ENCODE measurements at regions of chrX and their contacts with region 1.

Region 1: GRCh38 chrX:50770702-50771101 is 43.3 kb downstream of the SHROOM4 start:
- DNase-seq: peak; percentile 5
- H3K4me3 ChIP-seq: no peak overlapping the region
- H3K27ac ChIP-seq: no peak overlapping the region
- H3K4me1 ChIP-seq: peaks cover 17% of the 10 kb centered on the region
- H3K27me3 ChIP-seq: no peaks in the 10 kb centered on the region
- CTCF ChIP-seq: no peak

Region 2: DNA sequence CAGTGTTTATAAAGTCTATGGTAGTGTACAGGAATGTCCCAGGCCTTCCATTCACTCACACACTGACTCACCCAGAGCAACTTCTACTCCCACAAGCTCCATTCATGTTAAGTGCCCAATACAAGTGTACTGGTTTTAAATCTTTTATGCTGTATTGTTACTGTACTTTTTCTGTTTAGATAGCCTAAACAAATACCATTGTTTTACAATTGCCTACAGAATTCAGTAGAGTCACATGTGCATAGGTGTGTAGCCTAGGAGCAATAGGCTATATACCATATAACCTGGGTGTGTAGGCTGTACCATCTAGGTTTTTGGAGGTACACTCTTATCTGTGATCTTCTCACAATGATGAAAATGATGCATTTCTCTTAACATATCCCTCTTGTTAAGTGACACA is 426.8 kb before region 1 on chrX:
- CTCF ChIA-PET with region 1: no interaction called
- dilution Hi-C with region 1: no loop called
- in situ Hi-C with region 1: no loop called
- intact Hi-C with region 1: no loop called
- DNase-seq: no peak
- H3K4me3 ChIP-seq: no peak overlapping the region
- H3K27ac ChIP-seq: no peak overlapping the region
- H3K4me1 ChIP-seq: no peaks in the 10 kb centered on the region
- H3K27me3 ChIP-seq: peaks cover 10% of the 10 kb centered on the region
- CTCF ChIP-seq: no peak

Region 3: DNA sequence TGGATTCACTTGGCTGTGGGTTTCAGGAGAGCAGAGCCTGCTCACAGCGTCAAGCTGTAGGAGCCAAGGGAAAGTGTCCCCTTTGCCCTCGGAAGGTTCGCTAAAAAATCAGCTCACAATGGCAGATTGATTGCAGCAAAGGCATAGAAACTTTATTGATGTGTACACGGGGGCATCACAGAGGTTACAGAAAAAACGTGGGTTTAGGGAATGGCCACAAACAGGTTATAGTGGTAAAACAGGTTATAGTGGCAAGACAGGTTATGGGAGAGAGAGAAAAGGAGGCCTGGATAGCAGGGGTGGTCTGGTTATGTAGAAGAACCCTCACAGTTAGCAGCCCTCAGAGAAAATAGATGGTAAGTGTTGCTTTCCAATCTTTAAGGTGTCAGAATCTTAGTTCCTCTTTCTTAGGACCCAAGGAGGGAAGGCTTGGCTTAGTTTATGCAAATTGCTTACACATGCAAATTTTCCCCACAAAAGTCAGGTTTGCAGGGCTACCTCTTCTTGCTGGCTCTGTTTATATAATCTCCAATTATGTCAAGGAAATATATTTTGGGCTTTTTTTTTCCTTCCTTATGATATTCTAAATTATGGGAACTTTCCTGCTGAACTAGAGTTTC is 253.5 kb after region 1 on chrX:
- CTCF ChIA-PET with region 1: no interaction called
- dilution Hi-C with region 1: loop called (anchors 10 kb)
- in situ Hi-C with region 1: no loop called
- intact Hi-C with region 1: no loop called
- DNase-seq: no peak
- H3K4me3 ChIP-seq: no peak overlapping the region
- H3K27ac ChIP-seq: no peak overlapping the region
- H3K4me1 ChIP-seq: no peaks in the 10 kb centered on the region
- H3K27me3 ChIP-seq: peaks cover 5% of the 10 kb centered on the region
- CTCF ChIP-seq: no peak

Measured in mammary epithelial cell (primary cell).